ENCODE measurements at regions of chr2 and their contacts with region 1.

Region 1: DNA sequence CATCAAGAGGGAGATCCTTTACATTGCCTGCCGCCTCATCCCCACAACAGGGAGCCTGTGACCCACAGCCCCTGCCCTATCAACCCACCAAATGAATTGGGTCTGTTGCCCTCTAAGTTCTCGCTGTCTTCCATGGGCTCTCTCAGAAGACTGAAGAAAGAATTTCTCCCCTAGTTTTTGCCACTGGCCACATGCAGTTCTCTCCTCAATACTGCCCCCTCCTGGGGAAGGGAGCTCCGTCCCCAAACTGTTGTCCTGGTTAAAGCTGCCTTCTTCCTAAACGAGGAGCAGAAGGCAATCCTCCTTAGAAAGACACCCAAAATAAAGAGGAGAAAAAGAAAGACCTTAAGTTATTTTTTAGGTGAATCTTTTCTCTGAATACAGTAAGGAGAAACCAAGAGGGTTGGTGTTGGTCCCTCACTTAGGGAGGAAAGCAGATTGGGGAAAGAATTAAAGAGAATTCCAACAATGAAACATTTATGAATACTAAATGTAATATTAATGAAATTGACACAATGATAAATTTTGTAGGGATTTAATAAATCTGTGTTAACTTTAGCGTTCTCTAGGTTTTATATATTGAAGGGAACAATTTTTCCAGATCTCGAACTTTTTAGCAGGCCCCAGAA is 31.1 kb upstream of the SATB2 start:
- DNase-seq: no peak
- H3K4me3 Mint-ChIP-seq: no peak overlapping the region
- H3K27ac Mint-ChIP-seq: no peak overlapping the region
- H3K4me1 Mint-ChIP-seq: no peaks in the 10 kb centered on the region
- H3K27me3 Mint-ChIP-seq: peaks cover 4% of the 10 kb centered on the region

Region 2: GRCh38 chr2:198309673-198310280 is 1179.1 kb before region 1 on chr2:
- intact Hi-C with region 1: loop called (anchors 1 kb)
- DNase-seq: peak; percentile 25
- H3K4me3 Mint-ChIP-seq: no peak overlapping the region
- H3K27ac Mint-ChIP-seq: no peak overlapping the region
- H3K4me1 Mint-ChIP-seq: no peaks in the 10 kb centered on the region
- H3K27me3 Mint-ChIP-seq: peaks cover 7% of the 10 kb centered on the region

Measured in activated T-helper 1 cell treated with anti-CD3 and anti-CD28 coated beads, Interleukin-12 subunit alpha, Interleukin-12 subunit beta, Interleukin-2, Interleukin-4 antibody, amounts not matched to agents 30 ng/mL and 10 ng/mL and 1 ng/mL, durations not matched to agents 14 hours and 24 hours and 36 hours (primary cell).